ENCODE measurements at regions of chr11 and their contacts with region 1.

Region 1: DNA sequence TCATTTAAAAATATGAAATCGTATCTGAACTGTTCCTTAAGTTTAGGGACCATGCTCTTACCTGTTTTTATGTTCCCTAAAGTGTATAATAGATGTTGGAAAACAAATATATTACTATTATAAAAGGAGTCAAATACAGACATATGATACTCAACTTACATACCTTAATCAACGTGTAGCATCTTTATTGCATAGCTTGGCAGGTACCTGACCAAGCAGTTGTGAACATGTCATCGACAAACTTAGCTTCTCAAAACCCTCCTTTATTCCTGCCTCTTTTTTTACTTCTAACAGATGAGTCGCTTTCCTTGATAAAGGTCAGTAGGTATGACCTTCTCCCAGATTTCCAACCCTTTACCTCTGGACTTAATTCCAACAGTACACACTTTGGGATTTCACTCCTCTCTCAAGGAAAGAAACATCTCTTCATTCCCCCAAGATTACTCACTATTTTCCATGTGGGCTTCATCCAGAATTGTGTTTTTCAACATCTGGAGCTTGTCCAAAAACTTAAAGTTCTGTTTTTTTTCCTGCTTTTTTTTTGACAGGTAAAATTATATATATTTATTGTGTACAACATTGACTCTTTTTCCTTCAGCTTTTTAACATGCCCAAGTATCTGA is 11.9 kb downstream of the HIPK3 start:
- DNase-seq: no peak
- ATAC-seq: no peak
- H3K4me3 ChIP-seq: no peak overlapping the region
- H3K27ac ChIP-seq: no peak overlapping the region
- H3K4me1 ChIP-seq: peaks cover 2 to 8% of the 10 kb centered on the region in 2 donors
- H3K27me3 ChIP-seq: no peaks in the 10 kb centered on the region

Region 2: GRCh38 chr11:33172996-33173395 is 96.1 kb before region 1 on chr11:
- intact Hi-C with region 1: no loop called
- DNase-seq: no peak
- ATAC-seq: no peak
- H3K4me3 ChIP-seq: no peak overlapping the region
- H3K27ac ChIP-seq: no peak overlapping the region
- H3K4me1 ChIP-seq: no peaks in the 10 kb centered on the region
- H3K27me3 ChIP-seq: peaks cover 0 to 1% of the 10 kb centered on the region in 2 donors

Region 3: DNA sequence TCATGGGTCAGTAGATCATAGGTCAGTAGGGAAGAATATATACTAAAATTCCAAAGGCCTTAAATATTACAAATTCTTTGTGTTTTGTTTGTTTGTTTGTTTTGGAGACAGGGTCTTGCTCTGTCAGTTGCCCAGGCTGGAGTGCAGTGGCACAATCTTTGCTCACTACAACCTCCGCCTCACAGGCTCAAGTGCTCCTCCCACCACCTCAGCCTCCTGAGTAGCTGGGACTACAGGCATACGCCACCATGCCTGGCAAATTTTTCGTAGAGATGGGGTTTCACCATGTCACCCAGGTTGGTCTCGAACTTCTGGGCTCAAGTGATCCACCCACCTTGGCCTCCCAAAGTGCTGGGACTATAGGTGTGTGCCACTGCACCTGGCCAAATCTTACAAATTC is 70.9 kb after region 1 on chr11:
- intact Hi-C with region 1: loop called in 1 of 2 experiments (anchors 2 kb)
- DNase-seq: no peak
- ATAC-seq: no peak
- H3K4me3 ChIP-seq: no peak overlapping the region
- H3K27ac ChIP-seq: no peak overlapping the region
- H3K4me1 ChIP-seq: no peaks in the 10 kb centered on the region
- H3K27me3 ChIP-seq: no peaks in the 10 kb centered on the region